ENCODE measurements at regions of chr1 and their contacts with region 1.

Region 1: GRCh38 chr1:86965012-86965826 is 50.8 kb downstream of the HS2ST1 start:
- DNase-seq: peak; percentile 54
- ATAC-seq: peak; percentile 85
- H3K4me3 ChIP-seq: no peak overlapping the region
- H3K27ac ChIP-seq: no peak overlapping the region
- H3K4me1 ChIP-seq: no peaks in the 10 kb centered on the region
- H3K27me3 ChIP-seq: no peaks in the 10 kb centered on the region
- CTCF ChIP-seq: peak; percentile 84
- POLR2A ChIP-seq: no peak
- RAD21 ChIP-seq: peak; percentile 82

Region 2: DNA sequence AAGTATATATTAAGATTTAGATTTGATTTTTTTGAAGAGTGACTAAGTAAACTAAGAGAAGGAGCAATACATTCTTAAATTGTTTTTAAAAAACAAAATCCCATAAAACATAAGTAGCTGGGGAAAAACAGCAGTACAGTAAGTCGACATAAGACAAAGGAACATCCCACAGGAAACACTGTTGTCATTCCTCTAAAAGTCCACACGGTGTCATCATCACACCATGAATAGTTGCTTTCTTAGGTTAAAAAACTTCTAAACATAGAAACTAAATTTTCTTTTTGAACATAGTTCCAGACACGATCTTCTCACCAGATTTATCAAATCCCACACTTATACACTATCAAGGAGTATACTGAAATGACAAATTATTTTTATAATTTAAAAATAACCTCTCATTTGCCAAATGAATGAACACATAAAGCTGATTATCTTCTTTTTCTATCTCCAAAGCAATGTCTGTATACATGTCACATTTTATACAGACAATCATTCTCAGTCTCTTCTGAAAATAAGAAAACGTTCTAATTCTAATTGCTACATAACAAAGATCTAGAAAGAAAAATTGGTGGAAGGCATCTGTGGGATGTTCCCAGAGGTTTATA is 584.9 kb before region 1 on chr1:
- CTCF ChIA-PET with region 1: no interaction called
- POLR2A ChIA-PET with region 1: no interaction called
- dilution Hi-C with region 1: no loop called
- in situ Hi-C with region 1: loop called (anchors 25 kb)
- intact Hi-C with region 1: loop called (anchors 5 kb)
- DNase-seq: peak; percentile 86
- ATAC-seq: peak; percentile 97
- H3K4me3 ChIP-seq: no peak overlapping the region
- H3K27ac ChIP-seq: no peak overlapping the region
- H3K4me1 ChIP-seq: no peaks in the 10 kb centered on the region
- H3K27me3 ChIP-seq: no peaks in the 10 kb centered on the region
- CTCF ChIP-seq: peak; percentile 79
- POLR2A ChIP-seq: no peak
- RAD21 ChIP-seq: peak; percentile 91

Region 3: GRCh38 chr1:86470859-86471258 is 494.4 kb before region 1 on chr1:
- CTCF ChIA-PET with region 1: no interaction called
- POLR2A ChIA-PET with region 1: no interaction called
- dilution Hi-C with region 1: no loop called
- in situ Hi-C with region 1: no loop called
- intact Hi-C with region 1: loop called (anchors 10 kb)
- DNase-seq: no peak
- ATAC-seq: no peak
- H3K4me3 ChIP-seq: no peak overlapping the region
- H3K27ac ChIP-seq: no peak overlapping the region
- H3K4me1 ChIP-seq: 0 out of 2 replicates have a peak, but pooled peaks cover 3% of the 10 kb centered on the region
- H3K27me3 ChIP-seq: peaks cover 16% of the 10 kb centered on the region
- CTCF ChIP-seq: no peak
- POLR2A ChIP-seq: no peak
- RAD21 ChIP-seq: no peak

Region 4: GRCh38 chr1:86704458-86704971 is 260.7 kb before region 1 on chr1 and contains the start of gene SH3GLB1:
- CTCF ChIA-PET with region 1: no interaction called
- POLR2A ChIA-PET with region 1: no interaction called
- dilution Hi-C with region 1: no loop called
- in situ Hi-C with region 1: no loop called
- intact Hi-C with region 1: loop called (anchors 2 kb)
- DNase-seq: peak; percentile 82
- ATAC-seq: peak; percentile 93
- H3K4me3 ChIP-seq: peak within 1 kb of the TSS; percentile 64
- H3K27ac ChIP-seq: peak within 1 kb of the TSS; percentile 90
- H3K4me1 ChIP-seq: no peaks in the 10 kb centered on the region; the same call in 1 of the 2 replicates
- H3K27me3 ChIP-seq: no peaks in the 10 kb centered on the region
- CTCF ChIP-seq: peak; percentile 85
- POLR2A ChIP-seq: peak; percentile 68
- RAD21 ChIP-seq: 0 out of 2 replicates have a peak, but pooled peaks have one; percentile 22
- total RNA-seq, gene SH3GLB1: 22.2 and 30.3 TPM in 2 replicates

Region 5: DNA sequence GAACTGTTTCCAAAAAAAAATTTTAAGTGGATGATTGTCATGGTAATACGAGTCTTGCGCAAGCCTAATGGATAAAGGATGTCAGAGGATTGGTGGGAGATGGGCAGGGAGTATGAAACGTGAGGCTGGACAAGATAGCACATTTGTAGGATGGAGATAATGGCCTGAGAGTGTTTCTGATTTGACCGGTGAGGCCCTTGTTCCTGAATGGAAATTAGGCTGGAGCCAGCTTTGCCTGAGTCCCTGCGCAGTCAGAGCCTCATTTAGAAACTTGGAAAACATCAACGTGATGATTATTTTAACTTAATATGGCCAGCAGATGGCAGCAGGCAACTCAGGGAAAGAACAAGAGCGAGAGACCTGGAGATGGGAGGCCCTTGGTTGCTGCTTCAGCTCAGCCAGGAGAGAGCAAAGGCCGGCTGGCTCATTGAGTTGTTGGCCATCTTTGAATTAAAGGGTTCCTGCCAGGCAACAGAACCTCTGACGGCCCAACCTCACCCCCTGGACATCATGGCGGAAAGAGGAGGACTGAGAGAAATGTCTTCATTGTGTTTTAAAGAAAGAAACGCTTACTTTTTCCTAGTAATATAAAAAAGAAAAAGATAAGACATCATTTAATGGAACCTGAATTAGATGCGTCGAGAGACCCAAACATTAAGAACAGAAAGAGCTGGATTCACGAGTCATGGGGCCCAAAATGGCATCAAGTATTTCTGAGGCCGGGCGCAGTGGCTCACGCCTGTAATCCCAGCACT is 131.6 kb before region 1 on chr1:
- CTCF ChIA-PET with region 1: interaction called, 5 read pairs
- POLR2A ChIA-PET with region 1: no interaction called
- dilution Hi-C with region 1: no loop called
- in situ Hi-C with region 1: no loop called
- intact Hi-C with region 1: loop called (anchors 1 kb)
- DNase-seq: peak; percentile 87
- ATAC-seq: peak; percentile 97
- H3K4me3 ChIP-seq: no peak overlapping the region
- H3K27ac ChIP-seq: no peak overlapping the region
- H3K4me1 ChIP-seq: no peaks in the 10 kb centered on the region
- H3K27me3 ChIP-seq: no peaks in the 10 kb centered on the region
- CTCF ChIP-seq: peak; percentile 79
- POLR2A ChIP-seq: no peak
- RAD21 ChIP-seq: peak; percentile 81

Region 6: GRCh38 chr1:86981482-86982213 is 16.4 kb after region 1 on chr1:
- CTCF ChIA-PET with region 1: no interaction called
- POLR2A ChIA-PET with region 1: no interaction called
- dilution Hi-C with region 1: no loop called
- in situ Hi-C with region 1: no loop called
- intact Hi-C with region 1: no loop called
- DNase-seq: no peak
- ATAC-seq: no peak
- H3K4me3 ChIP-seq: no peak overlapping the region
- H3K27ac ChIP-seq: no peak overlapping the region
- H3K4me1 ChIP-seq: no peaks in the 10 kb centered on the region
- H3K27me3 ChIP-seq: no peaks in the 10 kb centered on the region
- CTCF ChIP-seq: no peak
- POLR2A ChIP-seq: no peak
- RAD21 ChIP-seq: no peak

Region 7: DNA sequence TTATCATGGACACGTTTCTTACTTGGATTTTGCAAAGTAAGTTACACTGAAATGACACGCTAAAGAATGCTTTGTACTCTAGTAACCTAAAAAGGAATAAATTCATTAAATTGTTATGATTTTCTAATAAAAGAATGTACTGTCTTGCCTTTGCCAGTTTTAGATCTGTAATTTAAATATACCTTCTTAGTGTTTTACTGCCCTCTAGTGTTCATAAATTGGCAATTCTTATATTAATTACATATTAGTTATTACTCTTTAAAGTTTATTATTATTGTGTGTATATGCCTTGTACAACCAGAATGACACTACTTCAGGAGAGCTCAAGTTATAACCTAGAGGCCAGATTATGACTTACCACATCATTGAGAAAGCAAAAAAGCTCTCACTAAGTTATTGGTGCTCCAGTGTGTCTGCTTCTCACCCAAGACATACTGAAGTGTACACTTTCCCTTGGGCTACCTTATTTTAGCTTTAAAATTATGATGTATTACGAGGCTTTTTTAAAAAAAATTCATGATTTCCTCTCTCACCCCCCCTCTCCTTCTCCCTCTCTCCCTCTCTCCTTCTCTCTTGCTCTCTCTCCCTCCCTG is 119.1 kb after region 1 on chr1:
- CTCF ChIA-PET with region 1: no interaction called
- POLR2A ChIA-PET with region 1: no interaction called
- dilution Hi-C with region 1: no loop called
- in situ Hi-C with region 1: no loop called
- intact Hi-C with region 1: loop called (anchors 5 kb)
- DNase-seq: peak; percentile 60
- ATAC-seq: peak; percentile 78
- H3K4me3 ChIP-seq: no peak overlapping the region
- H3K27ac ChIP-seq: no peak overlapping the region
- H3K4me1 ChIP-seq: peaks cover 2% of the 10 kb centered on the region; the same call in 1 of the 2 replicates
- H3K27me3 ChIP-seq: no peaks in the 10 kb centered on the region
- CTCF ChIP-seq: peak; percentile 64
- POLR2A ChIP-seq: no peak
- RAD21 ChIP-seq: peak; percentile 60

Measured in IMR-90 (cell line).